Thyroid gland (tissue), 4 donors: ENCODE measurements at regions of chr12 and their contacts with region 1.

Region 1: GRCh38 chr12:53675651-53676453 is at the start of gene ATP5MC2:
- DNase-seq: peak; percentile 97 to 98
- H3K4me3 ChIP-seq: peak within 1 kb of the TSS; percentile 34 to 81 (median 54)
- H3K27ac ChIP-seq: peak within 1 kb of the TSS; percentile 85 to 88 (median 86)
- H3K4me1 ChIP-seq: peaks cover 14 to 21% of the 10 kb centered on the region in 2 donors
- H3K27me3 ChIP-seq: no peaks in the 10 kb centered on the region
- CTCF ChIP-seq: peak; percentile 97 to 100 (median 98)
- POLR2A ChIP-seq: peak in 1 of 2 donors; percentile 82
- total RNA-seq, gene ATP5MC2: 181 to 334 (median 259) TPM

Region 2: GRCh38 chr12:53543539-53543938 is 132.3 kb before region 1 on chr12:
- intact Hi-C with region 1: loop called (anchors 2 kb)
- DNase-seq: peak; percentile 52 to 61
- H3K4me3 ChIP-seq: no peak overlapping the region
- H3K27ac ChIP-seq: peak overlapping the region; percentile 7 to 81 (median 38)
- H3K4me1 ChIP-seq: peaks cover 18 to 26% of the 10 kb centered on the region in 2 donors
- H3K27me3 ChIP-seq: no peaks in the 10 kb centered on the region
- CTCF ChIP-seq: peak; percentile 58 to 97 (median 80)
- POLR2A ChIP-seq: no peak

Region 3: GRCh38 chr12:53625946-53626701 is 49.7 kb before region 1 on chr12 and contains the start of gene ATF7:
- intact Hi-C with region 1: loop called (anchors 5 kb)
- DNase-seq: peak; percentile 97 to 98
- H3K4me3 ChIP-seq: peak within 1 kb of the TSS; percentile 34 to 50 (median 37)
- H3K27ac ChIP-seq: peak within 1 kb of the TSS; percentile 76 to 92 (median 91)
- H3K4me1 ChIP-seq: peaks cover 28 to 32% of the 10 kb centered on the region in 2 donors
- H3K27me3 ChIP-seq: no peaks in the 10 kb centered on the region
- CTCF ChIP-seq: no peak
- POLR2A ChIP-seq: peak in 1 of 2 donors; percentile 78
- total RNA-seq, gene ATF7: 21.3 to 40.1 (median 37.6) TPM

Region 4: DNA sequence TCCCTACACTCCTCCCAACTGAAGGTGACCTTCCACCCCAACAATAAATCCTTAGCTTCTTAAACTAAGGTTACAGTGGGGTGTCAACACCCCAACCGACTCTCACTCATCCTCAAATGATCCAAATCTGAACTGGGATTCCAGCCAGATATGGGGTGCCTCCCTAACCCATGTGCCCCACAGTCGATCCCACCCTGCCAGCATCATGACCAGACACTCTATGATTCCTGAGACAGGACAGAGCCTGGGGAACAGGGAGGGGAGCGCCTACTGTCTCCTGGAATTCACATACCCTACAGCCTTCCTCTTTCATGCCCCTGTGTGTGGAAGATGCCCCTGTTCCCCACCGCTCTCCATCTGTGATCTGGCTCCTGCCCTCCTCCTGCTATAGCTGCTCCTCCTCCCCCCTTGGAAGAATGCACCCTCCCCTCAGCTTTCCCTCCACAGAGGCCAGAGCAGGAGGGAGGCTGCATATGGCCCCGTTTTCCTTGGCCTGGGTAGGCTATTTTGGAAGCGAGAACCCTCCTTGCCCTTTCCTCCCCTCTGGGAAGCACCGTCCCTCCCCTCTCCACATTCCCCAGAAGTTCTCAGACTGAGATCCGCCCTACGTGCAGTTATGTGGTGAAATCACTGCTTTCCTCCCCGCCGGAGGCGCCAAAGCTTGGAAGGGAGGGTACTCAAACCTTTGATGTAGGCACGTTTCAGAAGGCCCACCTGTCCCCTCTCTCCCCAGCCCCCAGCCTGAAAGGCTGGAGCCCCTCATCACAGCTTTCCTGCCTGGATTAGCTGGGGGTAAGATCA is 464.9 kb after region 1 on chr12:
- intact Hi-C with region 1: no loop called
- DNase-seq: peak in 1 of 2 donors; percentile 5
- H3K4me3 ChIP-seq: no peak overlapping the region
- H3K27ac ChIP-seq: peak overlapping the region in 2 of 3 donors; percentile 46 to 63
- H3K4me1 ChIP-seq: peaks cover 0 to 21% of the 10 kb centered on the region in 2 donors
- H3K27me3 ChIP-seq: no peaks in the 10 kb centered on the region
- CTCF ChIP-seq: no peak
- POLR2A ChIP-seq: no peak